Naive thymus-derived CD4-positive, alpha-beta T cell (primary cell): ENCODE measurements at regions of chr19 and their contacts with region 1.

Region 1: DNA sequence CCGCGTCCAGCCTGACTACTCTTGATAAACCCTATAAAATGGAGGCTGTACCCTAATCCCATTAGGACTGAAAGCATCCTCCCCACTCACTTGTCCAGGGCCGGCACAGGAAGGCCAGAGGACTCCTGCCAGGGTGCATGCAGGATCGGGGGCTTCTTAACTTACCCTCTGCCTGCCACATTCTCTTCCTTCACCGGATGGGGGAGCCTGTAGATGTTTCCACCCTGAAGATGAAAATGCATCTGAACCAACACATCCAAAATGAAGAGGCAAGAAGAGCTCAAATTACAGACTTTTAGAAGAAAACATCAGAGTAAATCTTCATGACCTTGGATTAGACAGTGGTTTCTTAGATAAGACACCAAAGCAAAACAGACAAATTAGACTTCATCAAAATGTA is 25.9 kb upstream of the NAPA start:
- DNase-seq: peak in 2 of 9 donors; percentile 17 to 21
- ATAC-seq: no peak
- H3K4me3 ChIP-seq: no peak overlapping the region
- H3K4me3 Mint-ChIP-seq: peak overlapping the region in 2 of 10 donors; percentile 3 to 49
- H3K27ac ChIP-seq: no peak overlapping the region
- H3K27ac Mint-ChIP-seq: peak overlapping the region in 6 of 9 donors; percentile 9 to 89 (median 74)
- H3K4me1 ChIP-seq: peaks cover 0 to 23% of the 10 kb centered on the region in 2 donors
- H3K4me1 Mint-ChIP-seq: peaks cover 0 to 21% (median 13%) of the 10 kb centered on the region in 7 donors
- H3K27me3 ChIP-seq: no peaks in the 10 kb centered on the region
- H3K27me3 Mint-ChIP-seq: peaks cover 0 to 10% (median 5%) of the 10 kb centered on the region in 5 donors

Region 2: DNA sequence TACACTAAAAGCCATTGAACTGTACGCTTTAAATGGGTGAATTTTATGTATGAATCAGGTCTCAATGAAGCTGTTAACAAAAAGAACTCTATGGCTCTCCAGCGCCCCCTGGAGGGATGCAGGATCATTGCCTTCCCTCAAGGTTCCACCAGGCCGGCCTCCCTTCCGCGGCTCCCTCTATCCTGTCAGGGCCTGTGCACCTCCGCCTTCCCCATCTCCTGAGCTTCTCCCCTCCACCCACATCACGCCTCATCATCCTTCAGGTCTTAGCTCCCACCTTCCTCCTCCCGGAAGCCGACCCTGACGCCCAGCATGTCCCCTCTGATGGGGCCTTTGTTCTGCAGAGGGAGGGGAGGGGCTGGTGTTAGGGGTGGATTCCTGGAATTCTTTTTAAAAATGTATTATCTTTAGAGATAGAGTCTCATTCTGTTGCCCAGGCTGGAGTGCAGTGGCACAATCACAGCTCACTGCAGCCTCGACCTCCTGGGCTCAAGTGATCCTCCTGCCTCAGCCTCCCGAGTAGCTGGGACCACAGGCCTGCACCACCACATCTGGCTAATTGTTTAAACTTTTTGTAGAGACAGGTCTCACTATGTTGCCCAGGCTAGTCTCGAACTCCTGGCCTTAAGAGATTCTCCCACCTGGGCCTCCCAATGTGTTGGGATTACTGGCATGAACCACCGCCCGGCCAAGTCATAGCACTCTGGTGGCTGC is 149.1 kb before region 1 on chr19:
- CTCF ChIA-PET with region 1: no interaction called
- POLR2A ChIA-PET with region 1: no interaction called
- intact Hi-C with region 1: no loop called
- DNase-seq: peak; percentile 56 to 80 (median 74)
- ATAC-seq: peak; percentile 68
- H3K4me3 ChIP-seq: no peak overlapping the region
- H3K4me3 Mint-ChIP-seq: peak overlapping the region in 1 of 10 donors; percentile 17
- H3K27ac ChIP-seq: no peak overlapping the region
- H3K27ac Mint-ChIP-seq: peak overlapping the region in 1 of 9 donors; percentile 67
- H3K4me1 ChIP-seq: no peaks in the 10 kb centered on the region
- H3K4me1 Mint-ChIP-seq: peaks cover 0 to 5% (median 0%) of the 10 kb centered on the region in 7 donors
- H3K27me3 ChIP-seq: no peaks in the 10 kb centered on the region
- H3K27me3 Mint-ChIP-seq: peaks cover 7 to 21% (median 16%) of the 10 kb centered on the region in 5 donors

Region 3: DNA sequence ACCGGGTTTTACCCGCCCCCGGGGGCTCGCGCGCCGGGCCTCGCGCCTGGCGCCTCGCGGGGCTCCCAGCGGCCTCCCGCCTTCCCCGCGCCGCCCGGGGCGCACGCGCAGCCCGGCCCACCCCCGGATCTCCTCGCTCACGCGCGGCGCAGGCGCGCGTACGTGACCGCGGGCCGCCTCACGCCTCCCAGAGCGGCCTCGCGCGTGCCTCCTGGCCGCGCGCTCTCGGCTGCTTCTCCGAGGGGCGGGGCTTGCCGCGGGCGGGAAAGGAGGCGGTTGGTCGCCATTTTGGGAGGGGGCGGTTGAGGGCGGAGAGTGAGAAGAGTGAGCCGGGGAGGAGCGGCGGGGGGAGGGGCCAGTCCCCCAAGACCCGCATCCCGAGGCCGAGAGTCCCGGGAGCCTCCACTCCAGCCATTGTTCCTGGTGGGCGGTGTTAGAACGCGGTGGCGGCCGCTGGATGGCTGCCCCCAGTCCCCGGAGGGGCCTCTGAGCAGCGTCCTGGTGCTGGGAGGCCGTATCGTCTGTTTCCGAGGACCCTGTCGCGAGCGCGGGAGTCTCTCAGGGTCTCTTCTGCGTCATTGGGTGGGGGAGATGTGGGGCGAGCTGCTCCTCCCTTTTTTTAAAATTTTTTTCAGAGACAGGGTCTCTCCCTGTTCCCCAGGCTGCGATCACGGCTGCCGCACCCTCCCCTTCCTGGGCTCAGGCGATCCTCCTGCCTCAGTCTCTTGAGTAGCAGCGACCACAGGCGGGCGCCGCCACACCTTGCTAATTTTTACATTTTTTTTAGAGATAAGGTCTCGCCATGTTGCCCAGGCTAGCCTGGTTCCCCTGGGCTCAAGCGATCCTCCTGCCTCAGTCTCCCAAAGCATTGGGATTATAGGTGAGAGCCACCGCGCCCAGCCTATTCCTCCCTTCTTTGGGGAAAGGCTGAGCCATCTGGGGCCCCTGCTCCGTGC is 32.6 kb after region 1 on chr19 and contains the start of gene ZNF541:
- CTCF ChIA-PET with region 1: no interaction called
- POLR2A ChIA-PET with region 1: no interaction called
- intact Hi-C with region 1: loop called in 1 of 2 experiments (anchors 2 kb)
- DNase-seq: peak; percentile 72 to 91 (median 86)
- ATAC-seq: peak; percentile 97
- H3K4me3 ChIP-seq: peak within 1 kb of the TSS; percentile 54
- H3K4me3 Mint-ChIP-seq: peak within 1 kb of the TSS; percentile 44 to 82 (median 73)
- H3K27ac ChIP-seq: peak within 1 kb of the TSS; percentile 69
- H3K27ac Mint-ChIP-seq: peak within 1 kb of the TSS; percentile 17 to 88 (median 59)
- H3K4me1 ChIP-seq: peaks cover 13 to 17% of the 10 kb centered on the region in 2 donors
- H3K4me1 Mint-ChIP-seq: peaks cover 22 to 56% (median 40%) of the 10 kb centered on the region in 7 donors
- H3K27me3 ChIP-seq: no peaks in the 10 kb centered on the region
- H3K27me3 Mint-ChIP-seq: peaks cover 0 to 36% (median 0%) of the 10 kb centered on the region in 5 donors
- total RNA-seq, gene ZNF541: 0.36 to 1.5 (median 0.95) TPM

Region 4: GRCh38 chr19:47637550-47637949 is 96.8 kb after region 1 on chr19:
- CTCF ChIA-PET with region 1: no interaction called
- POLR2A ChIA-PET with region 1: no interaction called
- intact Hi-C with region 1: no loop called
- DNase-seq: no peak
- ATAC-seq: no peak
- H3K4me3 ChIP-seq: no peak overlapping the region
- H3K4me3 Mint-ChIP-seq: no peak overlapping the region
- H3K27ac ChIP-seq: no peak overlapping the region
- H3K27ac Mint-ChIP-seq: peak overlapping the region in 1 of 9 donors; percentile 47
- H3K4me1 ChIP-seq: no peaks in the 10 kb centered on the region
- H3K4me1 Mint-ChIP-seq: peaks cover 15 to 67% (median 56%) of the 10 kb centered on the region in 7 donors
- H3K27me3 ChIP-seq: no peaks in the 10 kb centered on the region
- H3K27me3 Mint-ChIP-seq: no peaks in the 10 kb centered on the region

Region 5: DNA sequence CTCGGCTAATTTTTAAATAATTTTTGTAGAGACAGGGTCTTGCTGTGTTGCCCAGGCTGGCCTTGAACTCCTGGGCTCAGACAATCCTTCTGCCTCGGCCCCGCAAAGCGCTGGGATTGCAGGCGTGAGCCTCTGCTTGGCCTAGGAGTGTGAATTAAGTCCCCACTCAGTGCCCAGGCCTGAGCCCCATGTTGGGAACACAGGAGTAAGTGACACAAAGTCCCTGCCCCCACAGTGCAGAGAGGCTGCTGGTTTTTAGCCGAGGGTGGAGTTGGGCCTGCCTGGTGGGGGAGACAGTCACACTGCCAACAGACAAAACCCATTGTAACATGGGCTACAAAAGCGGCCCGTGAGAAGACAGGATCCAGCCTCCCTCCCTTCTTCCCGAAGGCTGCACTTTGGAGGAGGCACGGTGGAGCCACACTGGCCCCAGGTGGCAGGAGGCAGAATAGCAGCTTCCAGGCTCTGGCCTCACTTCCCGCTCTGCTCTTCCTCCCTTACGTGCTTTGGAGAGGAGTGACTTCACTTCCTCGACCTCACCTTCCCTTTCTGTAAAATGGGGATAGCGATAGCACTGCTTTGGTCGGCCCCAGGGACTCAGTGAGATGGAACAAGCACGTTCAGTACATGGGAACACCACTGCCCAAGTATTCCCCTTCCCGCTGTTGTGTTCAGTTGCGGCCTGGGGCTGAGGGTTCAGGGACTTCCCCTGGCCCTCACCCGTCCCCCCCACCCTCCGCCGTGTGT is 157.3 kb after region 1 on chr19:
- CTCF ChIA-PET with region 1: interaction called, 5 read pairs
- POLR2A ChIA-PET with region 1: no interaction called
- intact Hi-C with region 1: loop called in 1 of 2 experiments (anchors 2 kb)
- DNase-seq: peak; percentile 10 to 59 (median 41)
- ATAC-seq: peak; percentile 76
- H3K4me3 ChIP-seq: no peak overlapping the region
- H3K4me3 Mint-ChIP-seq: no peak overlapping the region
- H3K27ac ChIP-seq: no peak overlapping the region
- H3K27ac Mint-ChIP-seq: peak overlapping the region in 2 of 9 donors; percentile 9 to 12
- H3K4me1 ChIP-seq: no peaks in the 10 kb centered on the region
- H3K4me1 Mint-ChIP-seq: peaks cover 0 to 6% (median 3%) of the 10 kb centered on the region in 7 donors
- H3K27me3 ChIP-seq: no peaks in the 10 kb centered on the region
- H3K27me3 Mint-ChIP-seq: no peaks in the 10 kb centered on the region